Cardiac septum (tissue), 1 donor: ENCODE measurements at regions of chr11 and their contacts with region 1.

Region 1: GRCh38 chr11:92211576-92212167 is 12.9 kb upstream of the FAT3 start:
- DNase-seq: no peak

Region 2: GRCh38 chr11:92886243-92886905 is 674.7 kb after region 1 on chr11:
- intact Hi-C with region 1: loop called (anchors 2 kb)
- DNase-seq: no peak